Uterus (tissue), 4 donors: ENCODE measurements at regions of chr5 and their contacts with region 1.

Region 1: DNA sequence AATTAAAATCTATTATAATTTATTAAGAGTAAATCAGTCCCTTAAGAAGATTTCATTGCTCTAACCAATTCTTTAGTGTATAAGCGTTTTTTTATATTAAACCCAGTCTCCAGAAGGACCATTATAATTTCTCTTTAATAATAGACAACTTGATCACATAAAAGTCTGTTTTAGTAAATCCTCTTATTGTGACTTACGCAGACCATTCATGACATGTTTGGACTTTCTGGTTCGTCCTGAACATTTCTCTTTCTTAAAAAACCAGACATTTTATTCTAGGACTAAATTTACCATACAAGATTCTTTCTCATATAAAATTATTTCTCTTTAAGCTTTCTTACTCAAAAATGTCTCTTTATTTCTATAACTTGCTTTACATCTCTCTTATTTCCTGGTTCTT is 196.2 kb upstream of the RAI14 start:
- DNase-seq: no peak
- H3K4me3 ChIP-seq: no peak overlapping the region
- H3K27ac ChIP-seq: no peak overlapping the region
- H3K4me1 ChIP-seq: no peaks in the 10 kb centered on the region
- H3K27me3 ChIP-seq: no peaks in the 10 kb centered on the region
- CTCF ChIP-seq: no peak
- POLR2A ChIP-seq: no peak

Region 2: GRCh38 chr5:33997331-33997983 is 462.5 kb before region 1 on chr5:
- intact Hi-C with region 1: loop called (anchors 10 kb)
- DNase-seq: peak; percentile 42 to 66
- H3K4me3 ChIP-seq: no peak overlapping the region
- H3K27ac ChIP-seq: no peak overlapping the region
- H3K4me1 ChIP-seq: no peaks in the 10 kb centered on the region
- H3K27me3 ChIP-seq: no peaks in the 10 kb centered on the region
- CTCF ChIP-seq: peak; percentile 53 to 68 (median 60)
- POLR2A ChIP-seq: no peak